Sigmoid colon (tissue), 7 donors: ENCODE measurements at regions of chrX and their contacts with region 1.

Region 1: GRCh38 chrX:2774057-2774456 is 22.2 kb downstream of the XG start:
- DNase-seq: no peak
- H3K4me3 ChIP-seq: no peak overlapping the region
- H3K27ac ChIP-seq: no peak overlapping the region
- H3K4me1 ChIP-seq: no peaks in the 10 kb centered on the region
- H3K27me3 ChIP-seq: no peaks in the 10 kb centered on the region
- CTCF ChIP-seq: no peak
- EP300 ChIP-seq: no peak
- POLR2A ChIP-seq: no peak

Region 2: GRCh38 chrX:2712890-2713840 is 60.9 kb before region 1 on chrX:
- intact Hi-C with region 1: loop called (anchors 2 kb)
- DNase-seq: no peak
- H3K4me3 ChIP-seq: no peak overlapping the region
- H3K27ac ChIP-seq: no peak overlapping the region
- H3K4me1 ChIP-seq: peaks cover 0 to 61% (median 37%) of the 10 kb centered on the region in 4 donors
- H3K27me3 ChIP-seq: no peaks in the 10 kb centered on the region
- CTCF ChIP-seq: no peak
- EP300 ChIP-seq: no peak
- POLR2A ChIP-seq: no peak